Sigmoid colon (tissue), 7 donors: ENCODE measurements at regions of chr11 and their contacts with region 1.

Region 1: GRCh38 chr11:47248664-47249377 is at the start of gene ACP2:
- DNase-seq: peak; percentile 94
- H3K4me3 ChIP-seq: peak within 1 kb of the TSS; percentile 72 to 79 (median 77)
- H3K27ac ChIP-seq: peak within 1 kb of the TSS; percentile 82 to 88 (median 85)
- H3K4me1 ChIP-seq: peaks cover 0 to 29% (median 25%) of the 10 kb centered on the region in 4 donors
- H3K27me3 ChIP-seq: no peaks in the 10 kb centered on the region
- CTCF ChIP-seq: peak in 2 of 4 experiments; percentile 10 to 20
- EP300 ChIP-seq: no peak
- POLR2A ChIP-seq: peak; percentile 36 to 47
- total RNA-seq, gene ACP2: 30.7 to 54.0 (median 34.9) TPM

Region 2: GRCh38 chr11:46936138-46937110 is 312.4 kb before region 1 on chr11 and contains the start of gene CSTPP1:
- intact Hi-C with region 1: loop called (anchors 5 kb)
- DNase-seq: peak; percentile 98
- H3K4me3 ChIP-seq: peak within 1 kb of the TSS; percentile 62 to 73 (median 66)
- H3K27ac ChIP-seq: peak within 1 kb of the TSS; percentile 53 to 72 (median 68)
- H3K4me1 ChIP-seq: peaks cover 0 to 15% (median 13%) of the 10 kb centered on the region in 4 donors
- H3K27me3 ChIP-seq: no peaks in the 10 kb centered on the region
- CTCF ChIP-seq: no peak
- EP300 ChIP-seq: no peak
- POLR2A ChIP-seq: no peak
- total RNA-seq, gene CSTPP1: 16.8 to 29.4 (median 20.9) TPM

Region 3: GRCh38 chr11:47051217-47051616 is 197.6 kb before region 1 on chr11:
- intact Hi-C with region 1: no loop called
- DNase-seq: no peak
- H3K4me3 ChIP-seq: no peak overlapping the region
- H3K27ac ChIP-seq: peak overlapping the region in 2 of 4 donors; percentile 56 to 62
- H3K4me1 ChIP-seq: peaks cover 0 to 32% (median 23%) of the 10 kb centered on the region in 4 donors
- H3K27me3 ChIP-seq: no peaks in the 10 kb centered on the region
- CTCF ChIP-seq: no peak
- EP300 ChIP-seq: no peak
- POLR2A ChIP-seq: no peak

Region 4: DNA sequence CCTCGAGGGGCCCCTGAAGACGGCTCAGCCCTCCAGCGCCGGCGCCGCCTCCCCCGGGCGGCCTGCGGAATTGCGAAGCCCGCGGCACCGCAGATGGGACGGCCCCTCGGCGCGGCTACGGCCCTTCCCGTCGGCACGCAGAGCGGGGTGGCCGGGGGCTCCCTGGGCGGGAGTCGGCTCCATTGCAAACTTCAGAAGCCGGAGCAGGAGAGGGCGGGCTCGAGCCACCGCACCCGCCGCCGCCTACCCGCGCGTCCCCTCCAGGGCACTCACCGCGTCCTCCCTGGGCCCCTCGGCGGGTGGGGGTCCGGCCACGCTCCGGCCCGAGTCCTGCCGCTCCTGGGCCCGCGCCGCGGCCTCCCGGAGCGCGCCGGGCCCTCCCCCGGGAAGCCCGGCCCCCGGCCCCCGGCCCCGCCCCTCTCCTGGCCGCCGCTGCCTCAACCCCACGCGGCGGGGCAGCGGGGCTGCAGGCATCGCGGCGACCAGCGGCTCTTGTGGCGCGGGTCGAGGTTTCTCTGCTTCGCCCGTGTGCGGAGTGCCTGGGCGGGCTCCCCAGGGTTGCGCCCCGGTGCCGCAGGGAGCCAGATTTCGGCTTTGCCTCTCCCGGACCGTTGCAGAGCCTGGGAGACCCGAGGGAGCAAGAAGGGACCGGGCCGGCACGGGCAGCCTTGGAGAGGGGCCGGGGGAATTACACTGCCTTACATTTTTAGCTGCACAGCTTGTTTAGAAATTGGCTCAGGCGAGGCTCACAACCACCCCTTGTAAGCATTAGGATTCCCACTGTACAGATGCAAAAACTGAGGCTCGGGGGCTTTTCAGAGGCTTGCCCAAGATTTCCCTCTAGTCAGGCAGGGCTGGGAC is 62.5 kb before region 1 on chr11 and contains the start of gene PACSIN3:
- intact Hi-C with region 1: loop called (anchors 5 kb)
- DNase-seq: peak; percentile 82
- H3K4me3 ChIP-seq: peak within 1 kb of the TSS; percentile 62 to 95 (median 75)
- H3K27ac ChIP-seq: peak within 1 kb of the TSS; percentile 88 to 99 (median 95)
- H3K4me1 ChIP-seq: peaks cover 0 to 72% (median 65%) of the 10 kb centered on the region in 4 donors
- H3K27me3 ChIP-seq: no peaks in the 10 kb centered on the region
- CTCF ChIP-seq: peak in 2 of 4 experiments; percentile 33 to 38
- EP300 ChIP-seq: no peak
- POLR2A ChIP-seq: peak in 1 of 2 donors; percentile 20
- total RNA-seq, gene PACSIN3: 56.0 to 78.3 (median 73.5) TPM

Region 5: GRCh38 chr11:47204637-47204989 is 44.2 kb before region 1 on chr11:
- intact Hi-C with region 1: no loop called
- DNase-seq: no peak
- H3K4me3 ChIP-seq: no peak overlapping the region
- H3K27ac ChIP-seq: peak overlapping the region in 2 of 4 donors; percentile 1 to 41
- H3K4me1 ChIP-seq: peaks cover 0 to 11% (median 2%) of the 10 kb centered on the region in 4 donors
- H3K27me3 ChIP-seq: no peaks in the 10 kb centered on the region
- CTCF ChIP-seq: no peak
- EP300 ChIP-seq: no peak
- POLR2A ChIP-seq: no peak

Region 6: DNA sequence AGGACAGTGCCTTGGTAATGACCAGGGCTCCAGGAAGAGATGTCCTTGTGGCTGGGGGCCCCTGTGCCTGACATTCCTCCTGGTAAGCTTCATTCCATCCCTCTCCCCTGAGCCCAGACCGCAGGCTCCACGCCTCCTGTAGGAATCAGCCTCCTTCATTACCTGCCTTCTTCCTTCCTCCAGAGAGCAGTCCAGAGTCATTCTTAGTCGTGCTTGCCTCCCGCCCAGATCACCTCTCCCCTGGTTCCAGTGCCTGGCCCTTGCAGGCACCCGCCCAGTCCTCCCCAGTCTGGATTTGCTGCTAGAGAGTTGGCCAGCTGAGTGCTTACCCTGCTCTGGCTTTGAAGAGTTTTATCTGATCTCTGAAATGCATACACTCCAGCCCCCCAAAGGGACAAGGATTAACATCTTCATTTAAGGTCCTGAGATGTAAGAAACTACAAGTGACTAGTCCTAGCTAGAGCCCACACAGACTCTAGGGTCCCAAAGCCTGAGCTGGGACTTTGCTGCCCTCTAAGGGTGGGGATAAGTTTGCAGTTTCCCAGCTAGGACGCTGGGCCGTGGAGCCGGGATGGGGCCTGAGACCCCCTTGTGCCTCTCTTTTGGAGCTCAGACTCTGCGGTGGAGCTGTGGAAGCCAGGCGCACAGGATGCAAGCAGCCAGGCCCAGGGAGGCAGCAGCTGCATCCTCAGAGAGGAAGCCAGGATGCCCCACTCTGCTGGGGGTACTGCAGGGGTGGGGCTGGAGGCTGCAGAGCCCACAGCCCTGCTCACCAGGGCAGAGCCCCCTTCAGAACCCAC is 10.6 kb after region 1 on chr11:
- intact Hi-C with region 1: no loop called
- DNase-seq: no peak
- H3K4me3 ChIP-seq: no peak overlapping the region
- H3K27ac ChIP-seq: peak overlapping the region in 3 of 4 donors; percentile 63 to 79 (median 69)
- H3K4me1 ChIP-seq: peaks cover 0 to 54% (median 38%) of the 10 kb centered on the region in 4 donors
- H3K27me3 ChIP-seq: no peaks in the 10 kb centered on the region
- CTCF ChIP-seq: peak in 3 of 4 experiments; percentile 29 to 54 (median 37)
- EP300 ChIP-seq: no peak
- POLR2A ChIP-seq: no peak

Region 7: DNA sequence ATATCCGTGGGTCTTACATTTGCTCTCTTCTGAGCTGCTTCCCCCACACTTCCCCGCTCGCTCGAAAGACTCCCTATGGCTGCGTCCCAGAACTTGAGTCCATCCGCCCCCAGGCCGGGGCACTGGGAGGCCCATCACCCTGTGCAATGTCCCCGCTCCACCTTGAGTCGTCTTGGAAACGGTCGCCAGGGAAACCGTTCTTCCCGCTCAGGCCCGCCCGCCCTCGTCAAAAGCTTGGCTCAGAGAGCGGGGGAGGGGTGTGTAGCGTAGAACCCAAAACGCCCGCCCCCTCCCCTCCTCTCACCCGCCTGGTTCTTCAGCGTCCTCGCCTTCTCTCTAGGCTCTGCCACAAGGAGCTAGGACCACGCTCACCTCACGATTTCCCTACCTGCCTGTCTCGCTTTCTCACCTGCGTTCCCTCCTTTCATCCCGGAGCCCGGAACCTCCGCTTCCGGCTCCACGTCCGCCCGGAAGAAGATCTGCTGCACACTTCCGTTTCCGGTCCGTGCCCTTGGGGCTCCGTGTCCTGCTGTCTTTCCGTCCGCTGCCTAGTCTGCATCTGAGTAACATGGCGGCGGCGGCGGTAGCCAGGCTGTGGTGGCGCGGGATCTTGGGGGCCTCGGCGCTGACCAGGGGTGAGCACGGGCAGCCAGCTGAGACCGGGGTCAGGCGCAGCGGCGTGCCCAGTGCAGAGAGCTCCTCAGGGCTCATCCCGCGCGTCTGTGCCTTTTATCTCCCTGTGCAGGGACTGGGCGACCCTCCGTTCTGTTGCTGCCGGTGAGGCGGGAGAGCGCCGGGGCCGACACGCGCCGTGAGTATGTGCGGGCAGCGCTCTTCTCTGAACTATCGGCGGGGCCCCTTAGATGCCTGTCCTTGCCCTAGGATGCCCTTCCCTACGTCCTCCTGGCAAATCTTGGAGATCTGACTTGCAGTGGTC is 330.0 kb after region 1 on chr11 and contains the starts of genes KBTBD4 and NDUFS3:
- intact Hi-C with region 1: no loop called
- DNase-seq: peak; percentile 95
- H3K4me3 ChIP-seq: peak within 1 kb of the TSS; percentile 93 to 97 (median 94)
- H3K27ac ChIP-seq: peak within 1 kb of the TSS; percentile 87 to 90 (median 88)
- H3K4me1 ChIP-seq: peaks cover 0 to 34% (median 26%) of the 10 kb centered on the region in 4 donors
- H3K27me3 ChIP-seq: no peaks in the 10 kb centered on the region
- CTCF ChIP-seq: no peak
- EP300 ChIP-seq: peak in 1 of 4 donors; percentile 19
- POLR2A ChIP-seq: peak; percentile 68 to 71
- total RNA-seq, gene KBTBD4: 13.3 to 29.9 (median 23.5) TPM
- total RNA-seq, gene NDUFS3: 74.4 to 106 (median 91.7) TPM